Activated CD4-positive, alpha-beta memory T cell treated with anti-CD3 and anti-CD28 coated beads for 36 hours (primary cell): ENCODE measurements at regions of chr3 and their contacts with region 1.

Region 1: DNA sequence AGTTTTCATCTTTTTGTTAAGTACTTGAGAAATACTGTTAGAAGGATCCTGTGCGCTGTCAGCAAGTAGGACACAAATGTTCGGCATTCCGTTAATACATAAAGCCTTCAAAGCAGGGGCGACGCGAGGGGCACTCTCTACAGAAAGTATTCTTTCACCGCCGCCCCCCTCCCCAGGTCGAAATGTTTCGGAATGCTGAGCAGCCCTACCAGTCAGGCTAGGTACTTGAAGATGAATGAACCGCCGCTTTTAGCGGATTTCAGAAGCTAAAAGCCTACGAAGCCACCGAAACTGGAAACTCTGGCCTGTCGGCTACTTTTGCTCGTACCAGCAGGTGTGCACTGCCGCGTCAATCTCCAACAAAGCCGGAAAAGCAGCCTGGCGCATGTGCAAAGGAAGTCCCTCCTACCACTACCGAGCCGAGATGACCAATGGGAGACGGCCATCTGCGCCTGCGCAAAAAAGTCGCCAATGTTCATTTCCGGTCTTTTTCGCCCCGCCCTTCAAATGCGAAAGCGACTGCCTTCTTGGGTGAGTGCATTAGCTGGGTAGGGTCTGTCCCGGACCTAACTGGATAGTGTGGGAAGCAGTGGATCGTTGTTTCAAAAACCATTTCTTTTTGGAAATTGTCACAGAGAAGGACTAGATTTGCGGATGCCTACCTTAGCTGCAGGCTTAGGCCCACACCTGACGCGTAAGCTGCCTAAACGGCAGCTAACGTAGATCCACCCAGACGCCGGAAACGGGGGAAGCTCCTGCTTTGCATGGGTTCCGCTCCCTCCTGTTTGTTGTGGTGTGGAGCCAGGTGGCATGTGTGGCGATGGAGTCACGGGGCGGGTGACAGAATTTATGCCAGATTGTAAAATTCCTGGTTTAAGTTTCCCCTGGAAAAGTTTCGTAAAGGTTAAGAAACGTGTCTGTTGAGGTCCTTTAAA is at the start of gene WDR5B:
- DNase-seq: peak; percentile 99
- H3K4me3 Mint-ChIP-seq: peak within 1 kb of the TSS; percentile 91
- H3K27ac Mint-ChIP-seq: peak within 1 kb of the TSS; percentile 97
- H3K4me1 Mint-ChIP-seq: peaks cover 47% of the 10 kb centered on the region
- H3K27me3 Mint-ChIP-seq: peaks cover 1% of the 10 kb centered on the region
- total RNA-seq, gene WDR5B: 3.7 to 4.4 TPM

Region 2: DNA sequence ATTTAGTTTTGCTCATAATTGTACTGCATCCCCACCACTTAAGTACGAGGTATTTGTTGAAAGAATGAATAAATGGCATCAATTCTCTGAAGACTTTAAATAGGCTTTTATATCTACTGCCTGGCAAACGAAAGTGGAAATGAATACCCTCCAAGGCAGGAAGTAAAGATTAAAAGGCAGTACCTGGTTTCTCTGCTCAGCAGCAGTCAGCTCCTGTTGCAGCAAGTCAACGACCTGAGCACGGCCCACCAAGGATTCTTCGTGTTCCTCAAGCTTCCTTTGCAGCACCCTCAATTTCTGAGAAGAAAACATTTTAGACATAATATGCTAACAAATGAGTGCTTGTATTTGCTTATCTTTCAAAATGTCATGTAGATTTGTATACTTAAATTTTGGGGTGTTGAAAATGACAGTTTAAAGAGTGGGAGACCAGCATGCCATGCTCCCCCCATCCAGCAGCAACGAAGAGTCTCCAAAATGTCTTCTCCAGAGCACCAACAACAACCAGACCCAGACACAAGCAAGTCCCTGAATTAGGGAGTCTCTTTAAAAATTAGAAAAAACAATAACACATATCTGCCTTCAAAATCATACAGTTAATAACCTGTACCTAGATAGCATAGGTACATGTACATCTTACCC is 697.7 kb before region 1 on chr3:
- CTCF ChIA-PET with region 1: no interaction called
- POLR2A ChIA-PET with region 1: no interaction called
- intact Hi-C with region 1: no loop called
- DNase-seq: no peak
- H3K4me3 Mint-ChIP-seq: no peak overlapping the region
- H3K27ac Mint-ChIP-seq: peak overlapping the region; percentile 46
- H3K4me1 Mint-ChIP-seq: peaks cover 16% of the 10 kb centered on the region
- H3K27me3 Mint-ChIP-seq: no peaks in the 10 kb centered on the region

Region 3: GRCh38 chr3:121749276-121750086 is 666.5 kb before region 1 on chr3 and contains the start of gene GOLGB1:
- CTCF ChIA-PET with region 1: no interaction called
- POLR2A ChIA-PET with region 1: no interaction called
- intact Hi-C with region 1: loop called (anchors 5 kb)
- DNase-seq: peak; percentile 97
- H3K4me3 Mint-ChIP-seq: no peak within 1 kb of the TSS
- H3K27ac Mint-ChIP-seq: no peak within 1 kb of the TSS
- H3K4me1 Mint-ChIP-seq: peaks cover 10% of the 10 kb centered on the region
- H3K27me3 Mint-ChIP-seq: no peaks in the 10 kb centered on the region
- total RNA-seq, gene GOLGB1: 22.7 to 26.0 TPM

Region 4: DNA sequence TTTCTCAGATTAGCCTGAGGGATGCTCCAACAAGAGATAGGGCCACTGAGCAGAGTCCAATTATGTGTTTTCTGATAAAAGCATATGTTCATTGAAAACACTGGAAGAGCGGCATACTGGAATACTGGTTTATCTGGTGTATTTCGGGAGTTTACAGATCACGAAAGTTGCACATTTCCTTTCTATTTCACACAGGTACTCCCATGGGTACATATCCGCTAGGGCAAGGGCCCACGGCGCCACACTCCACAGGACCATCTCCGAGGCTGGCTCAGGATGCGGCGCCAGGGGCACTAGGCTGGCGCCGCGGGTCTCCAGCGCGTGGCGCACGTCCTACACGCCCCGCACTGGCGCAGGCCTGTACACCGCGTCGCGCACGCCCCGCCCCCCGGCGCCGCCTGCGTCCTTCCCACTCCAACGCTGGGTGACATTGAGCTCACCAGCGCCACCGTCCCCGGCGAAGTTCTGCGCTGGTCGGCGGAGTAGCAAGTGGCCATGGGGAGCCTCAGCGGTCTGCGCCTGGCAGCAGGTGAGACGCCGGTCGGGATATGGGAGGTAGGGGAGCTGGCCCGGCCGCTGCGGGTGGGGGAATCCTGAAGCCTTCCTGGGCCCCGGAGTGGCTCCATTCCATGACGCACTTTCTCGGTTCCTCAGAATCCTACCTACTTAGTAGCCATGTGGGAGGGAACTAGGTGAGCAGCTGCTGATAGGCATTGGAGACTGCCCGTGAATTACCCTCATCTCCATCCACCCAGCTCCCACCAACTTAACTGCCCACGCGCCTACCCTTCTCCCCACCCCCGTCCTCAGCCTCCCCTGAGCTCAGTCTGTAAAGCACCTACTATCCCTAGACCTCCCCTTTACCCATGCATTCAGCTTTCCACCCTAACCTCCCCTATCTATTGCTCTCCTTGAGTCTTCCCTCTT is 32.0 kb before region 1 on chr3 and contains the start of gene FAM162A:
- CTCF ChIA-PET with region 1: interaction called, 12 read pairs
- POLR2A ChIA-PET with region 1: interaction called, 27 read pairs
- intact Hi-C with region 1: loop called (anchors 1 kb)
- DNase-seq: peak; percentile 95
- H3K4me3 Mint-ChIP-seq: peak within 1 kb of the TSS; percentile 94
- H3K27ac Mint-ChIP-seq: peak within 1 kb of the TSS; percentile 92
- H3K4me1 Mint-ChIP-seq: peaks cover 60% of the 10 kb centered on the region
- H3K27me3 Mint-ChIP-seq: no peaks in the 10 kb centered on the region
- total RNA-seq, gene FAM162A: 99.1 to 102 TPM

Region 5: GRCh38 chr3:122427857-122428471 is 12.0 kb after region 1 on chr3:
- CTCF ChIA-PET with region 1: no interaction called
- POLR2A ChIA-PET with region 1: interaction called, 3 read pairs
- intact Hi-C with region 1: loop called (anchors 1 kb)
- DNase-seq: no peak
- H3K4me3 Mint-ChIP-seq: no peak overlapping the region
- H3K27ac Mint-ChIP-seq: peak overlapping the region; percentile 74
- H3K4me1 Mint-ChIP-seq: peaks cover 23% of the 10 kb centered on the region
- H3K27me3 Mint-ChIP-seq: no peaks in the 10 kb centered on the region

Region 6: GRCh38 chr3:122793568-122794416 is 377.8 kb after region 1 on chr3 and contains the start of gene HSPBAP1:
- CTCF ChIA-PET with region 1: no interaction called
- POLR2A ChIA-PET with region 1: no interaction called
- intact Hi-C with region 1: loop called (anchors 10 kb)
- DNase-seq: peak; percentile 93
- H3K4me3 Mint-ChIP-seq: peak within 1 kb of the TSS; percentile 85
- H3K27ac Mint-ChIP-seq: peak within 1 kb of the TSS; percentile 82
- H3K4me1 Mint-ChIP-seq: peaks cover 29% of the 10 kb centered on the region
- H3K27me3 Mint-ChIP-seq: no peaks in the 10 kb centered on the region
- total RNA-seq, gene HSPBAP1: 4.8 TPM